Activated naive CD4-positive, alpha-beta T cell treated with anti-CD3 and anti-CD28 coated beads for 36 hours (primary cell): ENCODE measurements at regions of chr11 and their contacts with region 1.

Region 1: DNA sequence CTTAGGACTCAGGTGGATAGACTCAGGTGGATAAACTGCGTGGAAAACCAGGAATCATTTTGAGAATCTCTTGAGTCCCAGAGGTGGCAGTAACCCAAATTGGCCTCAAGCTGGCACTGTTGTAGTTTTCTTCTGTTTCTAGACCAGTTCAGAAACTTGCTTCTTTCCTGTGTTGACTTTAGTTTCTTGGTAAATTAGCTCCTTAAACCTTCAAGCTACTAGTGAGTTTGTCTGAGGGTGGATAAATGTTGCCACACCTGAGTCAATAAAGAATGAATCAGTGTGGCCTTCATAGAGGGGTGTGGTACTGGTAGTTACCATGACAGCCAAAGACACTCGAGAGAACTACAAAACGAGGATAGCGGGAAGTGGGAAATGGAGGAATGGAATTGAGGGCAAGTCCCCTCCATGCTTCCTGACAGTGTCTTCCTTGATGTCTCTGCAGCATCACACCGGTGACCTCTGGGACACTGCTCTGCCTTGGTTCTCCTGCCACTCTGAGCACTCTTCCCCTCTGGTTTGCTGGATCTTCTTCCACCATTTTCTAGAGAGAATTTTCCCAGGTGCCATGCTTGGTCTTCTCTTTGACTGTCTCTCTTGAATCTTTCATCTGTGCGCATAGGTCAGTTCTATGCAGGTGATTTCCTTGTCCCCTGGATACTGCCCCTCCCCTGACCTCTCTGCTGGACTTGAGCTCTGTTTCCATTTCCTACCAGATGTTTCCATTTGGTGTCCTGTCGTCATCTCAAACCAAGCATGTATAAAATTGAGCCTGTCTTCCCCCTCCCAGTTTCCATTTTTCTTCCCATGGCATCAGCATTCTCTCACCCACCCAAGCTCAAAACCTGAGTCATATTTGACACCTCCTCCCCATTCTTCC is 7.2 kb downstream of the POLD4 start:
- DNase-seq: peak; percentile 59
- H3K4me3 Mint-ChIP-seq: no peak overlapping the region
- H3K27ac Mint-ChIP-seq: peak overlapping the region; percentile 90
- H3K4me1 Mint-ChIP-seq: peaks cover 60% of the 10 kb centered on the region
- H3K27me3 Mint-ChIP-seq: no peaks in the 10 kb centered on the region

Region 2: DNA sequence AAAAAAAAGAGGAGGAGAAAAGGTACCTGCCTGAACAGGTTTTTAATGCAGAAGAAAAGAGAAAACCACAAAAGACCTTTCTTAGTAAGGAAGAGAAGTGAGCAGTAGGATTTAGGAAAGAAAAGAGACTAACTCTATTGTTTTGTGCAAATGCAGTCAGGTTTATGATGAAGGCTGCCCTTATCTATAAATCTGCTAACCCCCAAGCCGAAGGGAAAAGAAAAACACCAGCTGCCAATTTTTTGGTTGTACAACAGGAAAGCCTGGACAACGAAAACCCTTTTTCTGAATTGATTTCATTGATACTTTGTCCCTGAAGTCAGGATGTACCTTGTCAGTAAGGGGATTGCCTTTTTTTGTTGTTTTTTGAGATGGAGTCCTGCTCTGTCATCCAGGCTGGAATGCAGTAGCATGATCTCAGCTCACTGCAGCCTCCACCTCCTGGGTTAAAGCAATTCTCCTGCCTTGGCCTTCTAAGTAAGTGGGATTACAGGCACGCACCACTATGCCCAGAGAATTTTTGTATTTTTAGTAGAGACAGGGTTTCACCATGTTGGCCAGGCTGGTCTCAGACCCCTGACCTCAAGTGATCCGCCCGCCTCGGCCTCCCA is 14.0 kb before region 1 on chr11:
- CTCF ChIA-PET with region 1: interaction called, 17 read pairs
- intact Hi-C with region 1: no loop called
- DNase-seq: no peak
- H3K4me3 Mint-ChIP-seq: no peak overlapping the region
- H3K27ac Mint-ChIP-seq: no peak overlapping the region
- H3K4me1 Mint-ChIP-seq: no peaks in the 10 kb centered on the region
- H3K27me3 Mint-ChIP-seq: no peaks in the 10 kb centered on the region

Region 3: GRCh38 chr11:67373925-67374618 is 27.9 kb after region 1 on chr11:
- CTCF ChIA-PET with region 1: interaction called, 636 read pairs
- intact Hi-C with region 1: no loop called
- DNase-seq: peak; percentile 63
- H3K4me3 Mint-ChIP-seq: peak overlapping the region; percentile 73
- H3K27ac Mint-ChIP-seq: no peak overlapping the region
- H3K4me1 Mint-ChIP-seq: peaks cover 23% of the 10 kb centered on the region
- H3K27me3 Mint-ChIP-seq: peaks cover 28% of the 10 kb centered on the region

Region 4: DNA sequence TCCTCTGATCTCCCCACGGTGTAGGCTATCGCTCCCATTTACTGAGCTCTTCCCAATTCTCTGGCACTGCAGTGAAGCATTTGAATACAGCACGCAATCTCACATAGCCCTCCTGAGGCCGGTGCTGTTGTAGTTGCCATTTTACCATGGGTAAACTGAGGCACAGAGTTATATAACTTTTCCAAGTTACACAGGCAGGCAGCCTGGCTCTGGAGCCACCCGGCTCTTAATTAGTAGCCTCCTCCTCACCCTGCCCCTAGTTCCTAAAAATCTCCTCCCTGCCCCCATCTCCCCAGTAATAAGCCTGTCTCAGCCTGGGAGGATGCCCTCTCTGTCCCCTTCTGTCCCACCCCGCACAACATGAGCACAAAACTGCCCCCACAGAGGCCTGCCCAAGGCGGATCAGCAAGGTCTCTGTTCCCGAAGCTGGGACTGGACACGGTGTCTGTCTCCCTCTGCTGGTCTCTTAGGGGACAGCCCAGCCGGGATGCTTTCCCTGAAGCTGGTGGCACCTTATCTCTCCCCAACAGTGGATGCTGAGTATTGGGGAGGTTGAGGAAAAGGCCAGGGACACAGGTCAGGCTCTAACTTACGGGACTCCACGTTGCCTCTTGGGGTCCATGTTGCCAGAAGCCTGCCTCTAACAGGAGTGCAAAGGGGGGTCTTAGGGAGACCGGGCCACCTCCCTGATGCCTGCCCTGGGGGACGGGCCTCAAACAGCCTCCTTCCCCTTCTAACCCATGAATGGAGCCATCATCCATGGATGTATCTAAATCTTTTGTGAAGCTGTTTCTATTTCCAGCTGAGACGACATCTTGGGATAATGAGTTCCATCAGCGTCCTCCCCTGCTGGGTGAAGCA is 36.3 kb after region 1 on chr11:
- CTCF ChIA-PET with region 1: interaction called, 636 read pairs
- intact Hi-C with region 1: loop called (anchors 1 kb)
- DNase-seq: peak; percentile 92
- H3K4me3 Mint-ChIP-seq: no peak overlapping the region
- H3K27ac Mint-ChIP-seq: no peak overlapping the region
- H3K4me1 Mint-ChIP-seq: peaks cover 2% of the 10 kb centered on the region
- H3K27me3 Mint-ChIP-seq: peaks cover 2% of the 10 kb centered on the region

Region 5: DNA sequence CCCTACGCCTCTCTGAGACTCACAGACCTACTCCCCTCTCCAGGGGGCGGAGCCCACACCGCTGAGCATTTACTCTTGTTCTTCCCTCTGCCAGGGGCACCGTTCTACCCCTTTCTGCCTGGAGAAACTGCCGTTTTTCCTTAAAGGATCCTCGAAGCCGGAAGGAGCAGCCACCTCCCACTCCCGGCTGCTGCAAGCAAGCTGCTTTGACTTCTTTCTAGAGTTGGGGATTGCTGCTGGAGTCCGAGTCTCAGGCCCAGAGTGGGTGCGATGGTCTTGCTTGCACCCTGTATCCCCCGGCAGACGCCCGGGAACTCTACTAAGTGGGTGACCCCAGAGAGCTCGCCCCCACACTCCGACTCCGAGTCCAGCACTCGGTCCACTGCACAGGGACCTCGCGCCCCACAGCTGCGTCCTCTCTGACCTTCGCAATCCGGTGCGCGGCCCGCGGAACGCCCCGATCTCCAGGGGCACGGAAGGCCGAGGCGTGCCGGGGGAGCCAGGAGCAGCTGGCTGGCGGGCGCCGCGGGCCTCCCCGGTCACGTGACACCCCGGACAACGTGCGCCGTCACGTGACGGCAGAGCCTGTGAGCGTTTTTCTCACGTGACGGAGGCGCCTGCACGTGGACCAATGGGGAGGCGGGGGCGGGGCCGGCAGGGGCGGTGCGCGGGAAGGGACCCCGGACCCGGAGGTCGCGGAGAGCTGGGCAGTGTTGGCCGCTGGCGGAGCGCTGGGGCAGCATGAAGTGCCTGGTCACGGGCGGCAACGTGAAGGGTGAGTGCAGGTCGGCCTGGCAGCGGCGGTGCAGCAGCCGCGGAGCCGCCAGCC is 45.4 kb after region 1 on chr11 and contains the start of gene RAD9A:
- CTCF ChIA-PET with region 1: interaction called, 636 read pairs
- intact Hi-C with region 1: no loop called
- DNase-seq: peak; percentile 93
- H3K4me3 Mint-ChIP-seq: peak within 1 kb of the TSS; percentile 86
- H3K27ac Mint-ChIP-seq: peak within 1 kb of the TSS; percentile 51
- H3K4me1 Mint-ChIP-seq: peaks cover 31% of the 10 kb centered on the region
- H3K27me3 Mint-ChIP-seq: no peaks in the 10 kb centered on the region
- total RNA-seq, gene RAD9A: 29.5 to 30.7 TPM